Activated CD4-positive, alpha-beta T cell treated with anti-CD3 and anti-CD28 coated beads, Interleukin-2, amount 10 ng/mL, durations not matched to agents 24 days and 14 days (primary cell): ENCODE measurements at regions of chr1 and their contacts with region 1.

Region 1: DNA sequence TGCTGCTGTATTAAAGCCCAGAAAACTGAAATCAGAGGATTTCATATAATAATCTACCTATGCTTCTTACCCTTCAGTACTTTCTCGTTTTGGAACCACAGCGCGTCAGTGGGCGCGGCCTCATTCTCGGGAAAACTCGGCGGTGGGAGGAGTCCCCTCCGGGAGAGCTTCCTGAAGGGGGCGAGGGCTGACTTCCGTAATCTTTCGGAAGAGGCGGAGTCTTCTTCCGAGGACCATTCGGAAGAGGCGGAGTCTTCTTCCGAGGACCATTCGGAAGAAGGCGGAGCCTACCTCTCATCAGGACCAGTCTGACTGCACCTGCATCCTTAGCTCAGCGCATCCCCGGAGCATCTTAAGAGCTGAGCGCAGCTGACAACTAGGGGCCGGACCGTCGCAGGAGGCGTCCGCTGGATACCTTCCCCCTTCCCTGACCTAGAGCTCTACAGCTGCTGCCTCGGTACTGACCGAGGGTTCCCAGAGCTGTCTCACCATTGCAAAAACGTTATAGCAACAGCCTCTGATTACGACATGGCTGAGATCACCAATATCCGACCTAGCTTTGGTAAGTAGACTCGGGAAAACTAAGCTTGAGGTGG is at the start of gene SYT11:
- DNase-seq: peak; percentile 98
- H3K4me3 Mint-ChIP-seq: peak within 1 kb of the TSS; percentile 90
- H3K27ac Mint-ChIP-seq: peak within 1 kb of the TSS; percentile 95
- H3K4me1 Mint-ChIP-seq: peaks cover 36% of the 10 kb centered on the region
- H3K27me3 Mint-ChIP-seq: no peaks in the 10 kb centered on the region
- total RNA-seq, gene SYT11: 17.8 and 18.5 TPM in 2 replicates

Region 2: DNA sequence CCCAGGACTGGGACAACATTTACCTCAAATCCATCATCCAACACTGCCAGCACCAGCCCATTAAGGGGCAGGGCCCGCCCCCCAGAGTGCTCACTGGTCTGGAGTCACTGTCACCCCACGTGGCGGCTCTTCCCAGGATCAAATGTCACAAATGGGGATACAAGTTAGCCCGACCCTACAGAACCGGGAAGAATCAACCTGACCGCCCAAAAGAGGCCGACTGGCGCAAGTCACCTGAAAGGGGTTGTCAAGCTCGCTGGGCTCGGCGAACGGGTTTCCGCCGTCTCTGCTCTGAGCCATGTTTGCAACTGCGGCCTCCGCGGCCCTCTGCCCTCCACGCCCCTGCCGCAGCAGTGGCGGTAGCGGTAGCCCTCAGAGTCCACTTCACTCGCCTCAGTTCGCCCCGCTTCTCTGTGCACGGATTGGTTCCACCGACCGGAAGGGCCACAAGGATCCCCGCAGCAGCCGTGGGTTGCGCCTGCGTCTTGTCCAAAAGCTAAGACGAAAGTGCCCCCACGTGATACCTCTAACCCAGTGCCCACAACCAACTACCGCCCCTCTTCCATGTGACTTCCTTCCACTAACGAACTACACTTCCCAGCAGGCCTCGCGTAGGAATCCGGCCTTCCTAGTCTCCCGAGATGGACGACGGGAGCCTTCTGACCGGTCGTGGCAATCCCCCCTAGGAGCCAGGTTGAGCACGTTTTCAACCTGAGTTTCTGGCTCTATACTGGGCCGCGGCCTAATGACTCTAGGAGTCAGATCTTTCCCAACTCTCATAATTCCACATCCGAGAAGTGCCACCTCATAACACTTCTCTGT is 597.3 kb before region 1 on chr1 and contains the start of gene SCAMP3:
- intact Hi-C with region 1: loop called (anchors 1 kb)
- DNase-seq: peak; percentile 96
- H3K4me3 Mint-ChIP-seq: peak within 1 kb of the TSS; percentile 96
- H3K27ac Mint-ChIP-seq: peak within 1 kb of the TSS; percentile 91
- H3K4me1 Mint-ChIP-seq: peaks cover 30% of the 10 kb centered on the region
- H3K27me3 Mint-ChIP-seq: no peaks in the 10 kb centered on the region
- total RNA-seq, gene SCAMP3: 152 and 158 TPM in 2 replicates

Region 3: GRCh38 chr1:155352631-155353030 is 506.7 kb before region 1 on chr1:
- intact Hi-C with region 1: no loop called
- DNase-seq: no peak
- H3K4me3 Mint-ChIP-seq: no peak overlapping the region
- H3K27ac Mint-ChIP-seq: no peak overlapping the region
- H3K4me1 Mint-ChIP-seq: no peaks in the 10 kb centered on the region
- H3K27me3 Mint-ChIP-seq: no peaks in the 10 kb centered on the region

Region 4: GRCh38 chr1:155636397-155637153 is 222.8 kb before region 1 on chr1:
- intact Hi-C with region 1: no loop called
- DNase-seq: no peak
- H3K4me3 Mint-ChIP-seq: peak overlapping the region; percentile 92
- H3K27ac Mint-ChIP-seq: peak overlapping the region; percentile 88
- H3K4me1 Mint-ChIP-seq: peaks cover 16% of the 10 kb centered on the region
- H3K27me3 Mint-ChIP-seq: no peaks in the 10 kb centered on the region

Region 5: GRCh38 chr1:155688324-155689080 is 170.8 kb before region 1 on chr1 and contains the start of gene YY1AP1:
- intact Hi-C with region 1: loop called (anchors 5 kb)
- DNase-seq: peak; percentile 97
- H3K4me3 Mint-ChIP-seq: peak within 1 kb of the TSS; percentile 97
- H3K27ac Mint-ChIP-seq: peak within 1 kb of the TSS; percentile 98
- H3K4me1 Mint-ChIP-seq: peaks cover 54% of the 10 kb centered on the region
- H3K27me3 Mint-ChIP-seq: no peaks in the 10 kb centered on the region
- total RNA-seq, gene YY1AP1: 64.3 and 65.1 TPM in 2 replicates

Region 6: DNA sequence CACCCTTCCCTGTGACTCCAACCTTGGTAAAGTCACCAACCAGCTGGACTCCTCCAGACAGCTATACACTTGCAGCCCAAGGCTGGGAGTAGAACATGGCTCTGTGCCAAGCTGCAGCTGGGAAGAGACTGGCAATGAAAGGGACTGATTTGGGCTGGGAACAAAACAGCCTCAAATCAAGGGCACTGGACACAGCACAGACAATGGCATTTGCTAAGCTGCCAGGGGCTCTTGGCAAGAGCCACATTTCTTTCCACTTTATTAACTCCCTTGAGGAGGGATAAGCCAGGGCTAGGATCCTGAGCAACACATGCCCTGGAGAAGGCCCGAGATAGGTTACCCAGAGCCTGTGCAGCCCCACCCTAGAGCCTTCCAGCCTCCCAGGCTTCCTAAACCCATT is 12.1 kb after region 1 on chr1:
- intact Hi-C with region 1: no loop called
- DNase-seq: no peak
- H3K4me3 Mint-ChIP-seq: no peak overlapping the region
- H3K27ac Mint-ChIP-seq: no peak overlapping the region
- H3K4me1 Mint-ChIP-seq: peaks cover 5% of the 10 kb centered on the region
- H3K27me3 Mint-ChIP-seq: no peaks in the 10 kb centered on the region

Region 7: GRCh38 chr1:155911156-155912055 is 52.1 kb after region 1 on chr1 and contains the start of gene RIT1:
- intact Hi-C with region 1: loop called (anchors 1 kb)
- DNase-seq: peak; percentile 95
- H3K4me3 Mint-ChIP-seq: peak within 1 kb of the TSS; percentile 97
- H3K27ac Mint-ChIP-seq: peak within 1 kb of the TSS; percentile 99
- H3K4me1 Mint-ChIP-seq: peaks cover 21% of the 10 kb centered on the region
- H3K27me3 Mint-ChIP-seq: no peaks in the 10 kb centered on the region
- total RNA-seq, gene RIT1: 17.9 and 21.7 TPM in 2 replicates

Region 8: DNA sequence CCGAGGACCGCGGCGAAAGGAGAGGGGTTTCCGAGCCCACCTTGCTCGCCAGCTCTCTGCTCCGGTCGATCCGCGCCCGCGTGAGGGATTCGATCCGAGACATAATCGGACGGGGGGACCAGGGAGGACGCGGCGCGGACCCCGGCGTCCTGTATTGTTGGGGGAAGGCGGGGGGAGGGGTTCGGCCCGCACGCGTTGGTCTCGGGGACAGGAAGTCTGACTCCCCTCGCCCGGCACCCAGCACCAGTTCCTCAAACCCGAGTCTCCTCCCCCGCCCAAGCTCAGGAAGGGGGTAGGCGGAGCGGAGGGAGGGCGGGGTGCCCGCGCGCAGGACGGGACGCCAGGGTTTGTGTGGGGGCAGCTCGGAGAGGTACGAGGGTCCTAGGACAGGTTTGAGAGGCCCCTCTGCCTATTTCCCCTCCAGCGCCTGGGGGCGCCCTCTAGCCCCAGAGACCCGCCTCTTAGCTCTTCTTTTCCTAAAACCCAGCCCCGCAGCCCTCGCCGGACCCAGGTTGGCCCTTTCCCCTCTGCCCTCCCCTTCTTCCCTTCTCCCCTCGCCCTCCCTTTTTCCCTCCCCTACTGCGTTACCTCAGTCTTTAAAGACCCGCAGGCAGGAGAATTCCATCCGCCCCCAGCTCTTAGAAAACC is 119.1 kb after region 1 on chr1 and contains the start of gene ARHGEF2:
- intact Hi-C with region 1: loop called (anchors 5 kb)
- DNase-seq: peak; percentile 94
- H3K4me3 Mint-ChIP-seq: peak within 1 kb of the TSS; percentile 99
- H3K27ac Mint-ChIP-seq: peak within 1 kb of the TSS; percentile 92
- H3K4me1 Mint-ChIP-seq: peaks cover 70% of the 10 kb centered on the region
- H3K27me3 Mint-ChIP-seq: no peaks in the 10 kb centered on the region
- total RNA-seq, gene ARHGEF2: 189 and 198 TPM in 2 replicates